Lower leg skin (tissue), 4 donors: ENCODE measurements at regions of chr1 and their contacts with region 1.

Region 1: DNA sequence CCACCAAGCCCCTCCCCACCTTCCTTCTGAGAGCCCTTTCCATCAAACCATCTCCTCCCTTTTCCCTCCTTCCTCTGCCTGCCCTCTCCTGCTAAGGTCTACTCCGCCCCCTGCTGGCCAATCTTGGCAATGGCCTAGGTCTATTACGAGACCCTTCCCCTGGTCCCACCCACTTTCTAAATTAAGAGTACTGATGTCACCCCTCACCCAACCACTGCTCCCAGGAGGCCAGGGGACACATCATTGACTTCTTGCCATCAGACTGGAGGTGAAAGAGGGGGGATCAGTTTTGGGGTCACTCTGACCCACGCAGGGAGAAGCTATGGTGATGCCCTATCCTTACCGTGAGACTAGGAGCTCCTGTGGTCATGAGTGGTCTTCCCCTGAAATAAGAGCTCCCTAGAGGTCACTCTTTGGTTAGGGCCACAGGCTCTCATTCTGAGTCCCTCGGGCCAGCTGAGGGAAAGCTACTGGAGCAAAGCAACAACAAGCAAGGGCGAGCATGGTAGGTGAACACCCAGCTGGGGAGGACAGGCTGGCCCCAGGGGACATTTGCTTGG is 34.6 kb upstream of the S100A7 start:
- DNase-seq: peak; percentile 65 to 93
- H3K4me3 ChIP-seq: no peak overlapping the region
- CTCF ChIP-seq: peak in 1 of 3 donors; percentile 85
- POLR2A ChIP-seq: no peak

Region 2: DNA sequence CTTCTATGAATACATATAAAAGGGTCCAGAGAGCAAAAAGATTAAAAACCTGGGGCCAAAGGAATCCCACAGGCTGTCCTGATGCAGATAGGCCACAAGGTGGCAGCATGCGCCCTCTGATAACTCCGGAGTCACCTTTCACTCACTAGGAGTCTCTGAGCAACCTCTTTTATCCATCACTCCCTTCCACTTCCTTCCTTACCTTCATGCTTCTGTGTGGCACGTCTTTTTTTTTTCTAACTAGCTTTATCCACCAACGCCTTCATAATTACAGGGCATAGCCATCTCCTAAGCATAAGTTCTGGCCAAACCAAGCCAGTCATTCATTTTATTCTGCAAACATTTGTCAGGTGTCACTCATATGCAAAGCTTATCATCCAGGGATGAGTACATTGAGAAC is 142.5 kb before region 1 on chr1:
- intact Hi-C with region 1: loop called (anchors 2 kb)
- DNase-seq: peak in 1 of 2 donors; percentile 89
- H3K4me3 ChIP-seq: no peak overlapping the region
- CTCF ChIP-seq: no peak
- POLR2A ChIP-seq: no peak

Region 3: GRCh38 chr1:154220071-154220969 is 725.3 kb after region 1 on chr1 and contains the start of gene UBAP2L:
- intact Hi-C with region 1: no loop called
- DNase-seq: peak; percentile 99 to 100
- H3K4me3 ChIP-seq: peak within 1 kb of the TSS; percentile 90
- CTCF ChIP-seq: no peak
- POLR2A ChIP-seq: peak in 1 of 2 donors; percentile 78
- total RNA-seq, gene UBAP2L: 46.0 to 74.6 (median 59.4) TPM